Activated T-helper 2 cell treated with anti-CD3 and anti-CD28 coated beads, Interferon-gamma antibody, Interleukin-2, Interleukin-4, amounts not matched to agents 10 μg/mL and 5 μg/mL and 100 μg/mL, durations not matched to agents 14 hours and 24 hours and 36 hours (primary cell): ENCODE measurements at regions of chr16 and their contacts with region 1.

Region 1: GRCh38 chr16:81261049-81261648 is 22.7 kb downstream of the BCO1 start:
- DNase-seq: no peak
- H3K4me3 Mint-ChIP-seq: no peak overlapping the region
- H3K27ac Mint-ChIP-seq: no peak overlapping the region
- H3K4me1 Mint-ChIP-seq: peaks cover 2% of the 10 kb centered on the region
- H3K27me3 Mint-ChIP-seq: peaks cover 3% of the 10 kb centered on the region

Region 2: GRCh38 chr16:81204798-81205680 is 56.1 kb before region 1 on chr16:
- intact Hi-C with region 1: loop called (anchors 10 kb)
- DNase-seq: no peak
- H3K4me3 Mint-ChIP-seq: no peak overlapping the region
- H3K27ac Mint-ChIP-seq: no peak overlapping the region
- H3K4me1 Mint-ChIP-seq: peaks cover 1% of the 10 kb centered on the region
- H3K27me3 Mint-ChIP-seq: peaks cover 6% of the 10 kb centered on the region

Region 3: GRCh38 chr16:81349996-81350618 is 89.0 kb after region 1 on chr16:
- intact Hi-C with region 1: loop called (anchors 10 kb)
- DNase-seq: no peak
- H3K4me3 Mint-ChIP-seq: no peak overlapping the region
- H3K27ac Mint-ChIP-seq: no peak overlapping the region
- H3K4me1 Mint-ChIP-seq: peaks cover 13% of the 10 kb centered on the region
- H3K27me3 Mint-ChIP-seq: no peaks in the 10 kb centered on the region